ENCODE measurements at regions of chr13 and their contacts with region 1.

Region 1: DNA sequence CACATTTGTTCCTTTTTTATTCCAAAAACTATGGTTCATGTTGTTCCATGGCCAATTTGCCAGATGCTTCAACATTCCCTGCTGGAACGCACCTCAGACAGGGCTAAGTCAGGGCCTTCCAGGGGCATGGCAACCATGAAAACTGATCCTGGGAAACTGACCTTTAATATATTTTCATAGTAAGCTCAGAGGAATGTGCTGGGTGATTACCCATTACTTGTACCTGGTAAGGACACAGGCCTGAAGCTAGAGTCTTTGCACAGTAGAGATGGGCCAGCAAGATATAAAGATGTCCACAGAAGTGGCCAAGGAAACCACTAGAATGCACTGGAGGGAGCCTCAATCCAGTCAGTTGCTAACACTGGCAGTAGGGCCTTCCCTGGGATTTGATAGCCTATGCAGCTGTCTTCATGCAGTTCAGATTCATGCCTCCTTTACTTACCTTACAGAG is 353.1 kb downstream of the ENOX1 start:
- DNase-seq: no peak
- H3K4me3 ChIP-seq: no peak overlapping the region
- H3K27ac ChIP-seq: peak overlapping the region in 1 of 2 donors; percentile 53
- H3K4me1 ChIP-seq: peaks cover 4 to 12% of the 10 kb centered on the region in 2 donors
- H3K27me3 ChIP-seq: no peaks in the 10 kb centered on the region
- CTCF ChIP-seq: no peak

Region 2: GRCh38 chr13:43510956-43511901 is 77.5 kb after region 1 on chr13:
- intact Hi-C with region 1: loop called (anchors 5 kb)
- DNase-seq: no peak
- H3K4me3 ChIP-seq: no peak overlapping the region
- H3K27ac ChIP-seq: peak overlapping the region; percentile 23 to 29
- H3K4me1 ChIP-seq: peaks cover 3 to 7% of the 10 kb centered on the region in 2 donors
- H3K27me3 ChIP-seq: no peaks in the 10 kb centered on the region
- CTCF ChIP-seq: no peak

Region 3: GRCh38 chr13:43608400-43609137 is 174.9 kb after region 1 on chr13:
- intact Hi-C with region 1: no loop called
- DNase-seq: no peak
- H3K4me3 ChIP-seq: no peak overlapping the region
- H3K27ac ChIP-seq: no peak overlapping the region
- H3K4me1 ChIP-seq: no peaks in the 10 kb centered on the region
- H3K27me3 ChIP-seq: no peaks in the 10 kb centered on the region
- CTCF ChIP-seq: no peak

Region 4: DNA sequence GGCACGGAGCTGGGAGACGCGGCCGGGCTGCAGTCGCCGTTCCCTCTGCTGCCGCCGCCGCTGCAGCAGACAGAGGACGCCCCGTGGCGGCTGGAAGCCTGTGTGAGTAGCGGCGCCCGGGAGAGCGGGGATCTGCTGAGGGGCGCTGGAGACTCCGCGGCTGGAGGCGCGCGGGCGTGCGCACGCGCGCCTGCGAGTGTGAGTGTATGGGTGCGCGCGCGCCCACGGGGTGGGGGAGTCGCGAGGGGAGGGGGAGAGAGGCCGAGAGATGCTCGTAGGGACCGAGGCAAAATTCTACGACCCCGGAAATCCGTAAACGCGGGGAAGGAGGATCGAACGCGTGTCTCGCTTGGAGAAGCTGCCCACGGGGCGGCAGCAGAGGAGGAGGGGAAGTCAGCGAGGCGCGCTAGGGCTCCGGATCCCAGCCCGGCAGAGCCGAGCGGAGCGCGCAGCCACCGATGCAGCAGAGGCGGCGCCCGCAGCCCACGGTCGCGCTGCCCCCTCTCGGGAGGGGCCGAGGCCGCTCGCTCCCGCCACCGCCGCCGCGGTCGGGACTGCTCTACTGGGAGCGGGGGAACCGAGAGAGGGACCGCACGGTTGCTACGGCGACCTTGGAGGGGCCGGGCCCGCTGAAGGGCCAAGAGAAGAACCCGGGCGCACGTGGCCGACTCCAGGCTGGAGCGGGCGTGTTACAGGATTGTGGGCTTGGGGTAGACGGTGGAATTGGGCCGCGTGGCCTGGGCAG is 353.2 kb after region 1 on chr13 and contains the start of gene ENOX1:
- intact Hi-C with region 1: loop called (anchors 10 kb)
- DNase-seq: no peak
- H3K4me3 ChIP-seq: peak within 1 kb of the TSS; percentile 64 to 91
- H3K27ac ChIP-seq: peak within 1 kb of the TSS in 1 of 2 donors; percentile 48
- H3K4me1 ChIP-seq: peaks cover 4 to 14% of the 10 kb centered on the region in 2 donors
- H3K27me3 ChIP-seq: no peaks in the 10 kb centered on the region
- CTCF ChIP-seq: peak in 1 of 3 experiments; percentile 34
- total RNA-seq, gene ENOX1: 0.21 TPM

Region 5: DNA sequence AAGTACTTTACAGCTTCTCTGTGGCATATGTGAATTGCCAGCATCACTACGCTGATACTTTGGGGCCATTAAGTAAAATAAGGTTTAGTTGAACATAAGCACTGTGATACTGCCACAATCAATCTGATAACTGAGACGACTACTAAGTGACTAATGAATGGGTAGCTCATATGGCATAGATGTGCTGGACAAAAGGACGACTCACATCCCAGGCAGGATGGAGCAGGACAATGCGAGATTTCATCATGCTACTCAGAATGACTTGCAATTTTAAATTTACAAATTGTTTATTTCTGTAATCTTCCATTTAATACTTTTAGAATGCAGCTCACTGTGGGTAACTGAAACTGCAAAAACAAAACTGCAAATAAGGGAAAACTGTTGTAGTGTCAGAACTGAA is 432.2 kb after region 1 on chr13:
- intact Hi-C with region 1: loop called (anchors 5 kb)
- DNase-seq: no peak
- H3K4me3 ChIP-seq: no peak overlapping the region
- H3K27ac ChIP-seq: no peak overlapping the region
- H3K4me1 ChIP-seq: no peaks in the 10 kb centered on the region
- H3K27me3 ChIP-seq: no peaks in the 10 kb centered on the region
- CTCF ChIP-seq: no peak